Mammary epithelial cell (primary cell): ENCODE measurements at regions of chr5 and their contacts with region 1.

Region 1: GRCh38 chr5:139690064-139690802 is 42.1 kb downstream of the CXXC5 start:
- DNase-seq: peak; percentile 28
- H3K4me3 ChIP-seq: no peak overlapping the region
- H3K27ac ChIP-seq: no peak overlapping the region
- H3K4me1 ChIP-seq: peaks cover under 1% of the 10 kb centered on the region
- H3K27me3 ChIP-seq: no peaks in the 10 kb centered on the region
- CTCF ChIP-seq: peak; percentile 59 to 64

Region 2: GRCh38 chr5:139670369-139671095 is 19.7 kb before region 1 on chr5:
- CTCF ChIA-PET with region 1: no interaction called
- dilution Hi-C with region 1: no loop called
- in situ Hi-C with region 1: no loop called
- intact Hi-C with region 1: loop called (anchors 1 kb)
- DNase-seq: no peak
- H3K4me3 ChIP-seq: no peak overlapping the region
- H3K27ac ChIP-seq: no peak overlapping the region
- H3K4me1 ChIP-seq: peaks cover 57% of the 10 kb centered on the region
- H3K27me3 ChIP-seq: no peaks in the 10 kb centered on the region
- CTCF ChIP-seq: peak in 1 of 2 donors; percentile 53

Region 3: GRCh38 chr5:139733698-139734538 is 43.7 kb after region 1 on chr5:
- CTCF ChIA-PET with region 1: no interaction called
- dilution Hi-C with region 1: no loop called
- in situ Hi-C with region 1: no loop called
- intact Hi-C with region 1: no loop called
- DNase-seq: peak; percentile 70
- H3K4me3 ChIP-seq: no peak overlapping the region
- H3K27ac ChIP-seq: no peak overlapping the region
- H3K4me1 ChIP-seq: peaks cover 20% of the 10 kb centered on the region
- H3K27me3 ChIP-seq: no peaks in the 10 kb centered on the region
- CTCF ChIP-seq: no peak

Region 4: DNA sequence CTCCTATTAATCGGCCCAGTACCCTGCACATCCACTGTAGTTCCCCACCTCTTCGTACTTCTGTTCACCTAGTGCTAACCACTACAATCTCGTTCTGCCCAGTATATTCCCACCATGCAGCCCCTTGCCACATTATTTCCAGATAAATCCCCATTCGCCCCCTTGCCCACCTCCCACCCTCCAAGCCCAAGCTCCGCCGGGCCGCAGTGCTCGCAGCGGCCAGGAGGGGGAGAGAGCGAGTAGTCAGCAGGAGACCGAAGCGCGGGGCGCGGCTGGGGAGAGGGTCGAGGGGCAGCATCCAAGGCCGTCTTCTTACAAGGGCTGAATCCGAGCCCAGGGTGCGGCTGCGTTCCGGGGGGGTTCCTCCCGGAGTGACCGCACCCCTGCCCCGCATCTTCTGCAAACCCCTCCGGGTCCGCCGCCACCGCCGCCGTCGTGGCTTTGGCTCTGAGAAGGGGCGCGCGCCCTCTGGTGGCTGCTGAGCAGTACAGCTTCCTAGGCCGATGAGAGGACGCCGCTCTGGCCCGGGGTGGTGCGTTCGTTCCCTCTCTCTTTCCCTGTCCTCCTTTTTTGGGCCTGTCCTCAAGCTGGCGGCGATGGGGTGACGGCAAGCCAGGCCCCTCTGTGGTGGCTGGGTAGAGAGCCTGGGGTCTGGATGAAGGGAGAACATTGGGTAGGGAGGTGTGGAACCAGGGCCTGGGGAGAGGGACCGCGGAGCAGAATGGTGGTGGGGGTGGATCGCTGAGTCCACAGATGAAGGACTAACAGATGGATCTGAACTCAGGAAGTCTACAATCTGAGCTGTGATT is 75.4 kb after region 1 on chr5:
- CTCF ChIA-PET with region 1: no interaction called
- dilution Hi-C with region 1: no loop called
- in situ Hi-C with region 1: no loop called
- intact Hi-C with region 1: loop called (anchors 5 kb)
- DNase-seq: peak; percentile 56
- H3K4me3 ChIP-seq: peak overlapping the region; percentile 53 to 76 (median 59)
- H3K27ac ChIP-seq: no peak overlapping the region
- H3K4me1 ChIP-seq: no peaks in the 10 kb centered on the region
- H3K27me3 ChIP-seq: no peaks in the 10 kb centered on the region
- CTCF ChIP-seq: peak; percentile 55 to 69